ENCODE measurements at regions of chr3 and their contacts with region 1.

Region 1: GRCh38 chr3:51371943-51372557 is 13.0 kb upstream of the MANF start:
- DNase-seq: peak; percentile 35
- ATAC-seq: peak; percentile 85
- H3K4me3 ChIP-seq: no peak overlapping the region
- H3K27ac ChIP-seq: no peak overlapping the region
- H3K4me1 ChIP-seq: no peaks in the 10 kb centered on the region
- H3K27me3 ChIP-seq: no peaks in the 10 kb centered on the region
- CTCF ChIP-seq: peak; percentile 79

Region 2: GRCh38 chr3:49813497-49814174 is 1558.4 kb before region 1 on chr3 and contains the start of gene UBA7:
- CTCF ChIA-PET with region 1: interaction called, 11 read pairs
- POLR2A ChIA-PET with region 1: no interaction called
- in situ Hi-C with region 1: no loop called
- intact Hi-C with region 1: no loop called
- DNase-seq: no peak
- ATAC-seq: peak; percentile 86
- H3K4me3 ChIP-seq: peak within 1 kb of the TSS; percentile 13 to 37
- H3K27ac ChIP-seq: peak within 1 kb of the TSS; percentile 51
- H3K4me1 ChIP-seq: no peaks in the 10 kb centered on the region
- H3K27me3 ChIP-seq: no peaks in the 10 kb centered on the region
- CTCF ChIP-seq: no peak
- total RNA-seq, gene UBA7: 12.5 TPM

Region 3: DNA sequence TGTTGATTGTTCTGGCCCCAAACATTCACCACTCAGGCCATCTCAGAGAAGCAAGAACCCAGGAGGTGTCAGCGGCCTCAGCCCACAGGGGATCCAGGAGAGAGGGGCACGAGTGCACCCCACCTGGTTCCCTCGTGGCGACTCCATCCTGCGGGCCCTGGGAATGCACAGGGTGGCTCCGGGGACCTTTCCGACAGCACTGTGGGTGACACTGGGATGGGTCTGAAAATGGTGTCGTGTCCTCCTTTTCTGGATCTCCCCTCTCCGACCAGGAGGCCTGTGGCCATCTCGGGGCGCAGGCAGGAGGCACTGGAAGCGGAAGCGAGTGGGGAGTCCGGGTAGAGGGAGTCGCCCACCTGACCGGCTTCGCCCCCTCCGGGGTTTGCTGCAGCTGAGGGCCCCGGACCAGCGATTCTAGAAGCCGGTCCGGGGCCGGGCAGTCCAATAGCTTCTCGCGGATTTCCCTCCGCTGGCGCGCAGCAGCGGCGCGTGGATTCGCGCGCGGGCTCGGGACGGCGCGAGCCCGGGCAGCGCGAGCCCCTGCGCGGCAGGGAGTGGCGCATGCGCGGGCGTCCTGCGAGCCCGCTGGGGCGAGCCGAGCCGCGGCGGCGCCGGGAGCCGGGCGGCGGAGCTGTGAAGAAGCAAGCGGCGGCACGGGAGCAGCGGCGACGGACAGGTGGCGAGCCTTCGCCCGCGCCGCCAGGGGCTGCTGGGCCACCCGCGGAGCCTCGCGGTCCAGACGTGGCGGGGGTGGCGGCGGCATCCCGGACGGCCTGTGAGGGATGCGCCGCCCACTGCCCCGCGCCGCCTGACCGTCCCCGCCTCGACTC is 697.5 kb before region 1 on chr3 and contains the start of gene DOCK3:
- CTCF ChIA-PET with region 1: no interaction called
- POLR2A ChIA-PET with region 1: no interaction called
- in situ Hi-C with region 1: no loop called
- intact Hi-C with region 1: loop called (anchors 10 kb)
- DNase-seq: no peak
- ATAC-seq: peak; percentile 90
- H3K4me3 ChIP-seq: peak within 1 kb of the TSS; percentile 27 to 32
- H3K27ac ChIP-seq: no peak within 1 kb of the TSS
- H3K4me1 ChIP-seq: peaks cover 3% of the 10 kb centered on the region; the same call in 1 of the 2 replicates
- H3K27me3 ChIP-seq: peaks cover 24% of the 10 kb centered on the region
- CTCF ChIP-seq: no peak
- total RNA-seq, gene DOCK3: 0.21 TPM

Region 4: DNA sequence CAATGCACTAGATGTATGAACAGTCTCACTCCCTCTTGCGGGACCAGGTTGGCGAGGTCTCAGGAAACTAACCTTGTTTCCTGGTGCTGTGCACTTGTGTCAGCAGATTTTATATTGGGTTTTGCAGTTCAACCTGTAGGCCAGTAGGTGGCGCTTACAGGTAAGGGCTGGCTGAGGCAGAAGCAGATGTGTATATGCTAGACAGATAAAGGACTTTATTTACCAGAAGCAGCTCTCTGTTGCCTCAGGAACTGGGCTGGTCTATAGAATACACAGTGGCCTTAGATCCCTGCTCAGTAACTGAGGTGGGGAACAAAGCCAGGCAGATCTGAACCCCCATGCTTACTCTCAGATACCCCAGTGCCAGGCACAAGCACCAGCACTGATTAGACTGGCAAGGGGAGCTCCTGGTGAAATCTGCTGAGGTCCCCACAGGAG is 400.5 kb before region 1 on chr3:
- CTCF ChIA-PET with region 1: interaction called, 4 read pairs
- POLR2A ChIA-PET with region 1: no interaction called
- in situ Hi-C with region 1: no loop called
- intact Hi-C with region 1: loop called (anchors 2 kb)
- DNase-seq: peak; percentile 24
- ATAC-seq: peak; percentile 90
- H3K4me3 ChIP-seq: no peak overlapping the region
- H3K27ac ChIP-seq: no peak overlapping the region
- H3K4me1 ChIP-seq: no peaks in the 10 kb centered on the region
- H3K27me3 ChIP-seq: no peaks in the 10 kb centered on the region
- CTCF ChIP-seq: peak; percentile 88

Region 5: GRCh38 chr3:51099794-51100535 is 272.1 kb before region 1 on chr3:
- CTCF ChIA-PET with region 1: interaction called, 6 read pairs
- POLR2A ChIA-PET with region 1: no interaction called
- in situ Hi-C with region 1: no loop called
- intact Hi-C with region 1: loop called (anchors 2 kb)
- DNase-seq: peak; percentile 10
- ATAC-seq: peak; percentile 83
- H3K4me3 ChIP-seq: no peak overlapping the region
- H3K27ac ChIP-seq: no peak overlapping the region
- H3K4me1 ChIP-seq: no peaks in the 10 kb centered on the region
- H3K27me3 ChIP-seq: no peaks in the 10 kb centered on the region
- CTCF ChIP-seq: peak; percentile 77

Region 6: DNA sequence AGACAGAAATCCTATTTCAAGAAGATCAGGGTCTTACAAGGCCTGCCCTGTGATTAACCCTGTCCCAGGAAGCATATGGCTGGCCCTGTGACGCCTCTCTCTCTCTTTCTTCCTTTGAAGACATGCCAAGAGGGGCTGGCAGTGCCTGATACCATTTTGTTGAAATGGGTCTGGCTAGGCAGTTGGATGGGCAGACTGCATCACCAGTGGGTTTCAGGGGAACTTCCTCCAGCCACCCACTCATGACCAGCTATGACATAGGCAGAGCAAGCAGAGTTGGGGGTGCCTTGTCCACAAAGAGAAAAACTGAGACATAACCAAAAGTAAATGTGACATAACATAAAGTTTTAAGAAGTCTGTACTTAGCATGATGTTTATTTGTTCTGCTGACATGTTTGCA is 18.4 kb before region 1 on chr3:
- CTCF ChIA-PET with region 1: no interaction called
- POLR2A ChIA-PET with region 1: no interaction called
- in situ Hi-C with region 1: no loop called
- intact Hi-C with region 1: no loop called
- DNase-seq: no peak
- ATAC-seq: no peak
- H3K4me3 ChIP-seq: no peak overlapping the region
- H3K27ac ChIP-seq: no peak overlapping the region
- H3K4me1 ChIP-seq: no peaks in the 10 kb centered on the region
- H3K27me3 ChIP-seq: no peaks in the 10 kb centered on the region
- CTCF ChIP-seq: no peak